Heart right ventricle (tissue), 16 donors: ENCODE measurements at regions of chr17 and their contacts with region 1.

Region 1: DNA sequence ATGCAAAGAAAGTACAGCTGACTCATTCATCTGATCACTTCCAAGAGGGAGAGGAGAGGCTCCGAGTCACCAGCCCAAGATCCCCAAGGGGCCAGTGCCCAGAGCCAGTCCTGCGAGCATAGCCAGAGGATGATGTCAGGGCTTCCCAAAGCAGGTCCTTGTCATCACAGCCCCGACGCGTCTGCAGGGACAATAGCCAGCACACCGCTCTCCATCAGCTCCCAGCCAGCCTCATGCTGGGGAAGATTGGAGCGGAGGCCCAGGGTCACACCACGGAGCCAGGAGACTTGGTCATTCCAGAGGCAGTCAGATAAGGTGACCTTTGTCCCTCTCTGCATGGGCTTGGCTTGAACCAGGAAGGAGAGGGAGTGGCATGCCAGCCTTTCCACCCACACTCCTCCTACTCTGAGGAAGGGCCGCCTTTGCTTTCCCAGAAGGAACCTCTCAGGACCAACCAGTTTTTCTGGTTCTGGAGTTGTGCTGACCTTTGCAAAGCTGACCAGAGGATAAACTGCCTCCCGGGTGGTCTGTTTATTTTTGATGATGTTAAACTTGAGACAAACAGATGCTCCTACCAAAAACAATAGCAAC is 58.3 kb upstream of the ARHGAP44 start:
- DNase-seq: peak; percentile 79 to 87
- ATAC-seq: peak; percentile 75 to 92 (median 84)
- H3K4me3 ChIP-seq: no peak overlapping the region
- H3K27ac ChIP-seq: peak overlapping the region; percentile 60 to 91 (median 80)
- H3K4me1 ChIP-seq: peaks cover 0 to 58% (median 24%) of the 10 kb centered on the region in 9 donors
- H3K27me3 ChIP-seq: no peaks in the 10 kb centered on the region
- CTCF ChIP-seq: no peak

Region 2: GRCh38 chr17:12545877-12546513 is 185.0 kb before region 1 on chr17:
- intact Hi-C with region 1: loop called in 1 of 10 experiments (anchors 5 kb)
- DNase-seq: peak in 1 of 2 donors; percentile 31
- ATAC-seq: peak; percentile 73 to 90 (median 84)
- H3K4me3 ChIP-seq: no peak overlapping the region
- H3K27ac ChIP-seq: no peak overlapping the region
- H3K4me1 ChIP-seq: peaks cover 0 to 11% (median 0%) of the 10 kb centered on the region in 9 donors
- H3K27me3 ChIP-seq: no peaks in the 10 kb centered on the region
- CTCF ChIP-seq: peak; percentile 45 to 78 (median 72)

Region 3: DNA sequence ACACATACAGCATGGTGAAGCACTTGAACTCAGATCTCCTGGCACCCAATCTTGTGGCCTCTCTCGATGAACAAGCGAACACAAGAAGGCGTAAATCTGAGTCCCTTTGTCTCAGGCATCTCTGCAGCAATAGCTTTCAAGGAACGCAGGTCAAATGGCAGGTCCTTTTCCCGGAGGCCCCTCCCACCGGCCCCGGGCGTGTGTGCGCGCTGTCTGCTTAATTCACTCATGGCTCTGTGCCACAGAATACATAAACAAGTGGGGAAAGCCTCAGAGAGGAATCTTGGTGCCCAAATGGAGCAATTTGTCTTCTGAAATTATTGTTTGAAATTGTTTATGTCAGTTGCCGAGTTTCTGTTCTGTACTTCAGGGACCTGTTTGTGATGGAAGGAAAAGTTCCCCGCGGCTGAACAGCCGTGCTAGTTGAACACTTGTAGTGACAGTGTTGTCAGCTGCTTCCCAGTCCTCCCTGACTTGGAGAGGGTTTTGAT is 50.6 kb before region 1 on chr17:
- intact Hi-C with region 1: loop called in 4 of 10 experiments (anchors 1 to 5 kb)
- DNase-seq: peak in 1 of 2 donors; percentile 25
- ATAC-seq: peak in 3 of 8 donors; percentile 40 to 68 (median 48)
- H3K4me3 ChIP-seq: peak overlapping the region in 3 of 10 donors; percentile 3 to 16 (median 13)
- H3K27ac ChIP-seq: peak overlapping the region; percentile 3 to 75 (median 62)
- H3K4me1 ChIP-seq: peaks cover 0 to 81% (median 29%) of the 10 kb centered on the region in 9 donors
- H3K27me3 ChIP-seq: no peaks in the 10 kb centered on the region
- CTCF ChIP-seq: no peak

Region 4: GRCh38 chr17:12800855-12801365 is 69.9 kb after region 1 on chr17:
- intact Hi-C with region 1: loop called in 1 of 10 experiments (anchors 10 kb)
- DNase-seq: no peak
- ATAC-seq: no peak
- H3K4me3 ChIP-seq: no peak overlapping the region
- H3K27ac ChIP-seq: no peak overlapping the region
- H3K4me1 ChIP-seq: peaks cover 0 to 11% (median 0%) of the 10 kb centered on the region in 9 donors
- H3K27me3 ChIP-seq: no peaks in the 10 kb centered on the region
- CTCF ChIP-seq: no peak

Region 5: GRCh38 chr17:13002766-13003451 is 271.9 kb after region 1 on chr17:
- intact Hi-C with region 1: no loop called
- DNase-seq: peak; percentile 77 to 81
- ATAC-seq: peak; percentile 81 to 95 (median 88)
- H3K4me3 ChIP-seq: no peak overlapping the region
- H3K27ac ChIP-seq: no peak overlapping the region
- H3K4me1 ChIP-seq: peaks cover 0 to 6% (median 0%) of the 10 kb centered on the region in 9 donors
- H3K27me3 ChIP-seq: no peaks in the 10 kb centered on the region
- CTCF ChIP-seq: peak; percentile 69 to 90 (median 83)